ENCODE measurements at regions of chr6 and their contacts with region 1.

Region 1: GRCh38 chr6:141403795-141404194 is 728.9 kb upstream of the GJE1 start:
- DNase-seq: no peak
- ATAC-seq: peak; percentile 42

Region 2: GRCh38 chr6:140784573-140784972 is 619.2 kb before region 1 on chr6:
- intact Hi-C with region 1: loop called (anchors 5 kb)
- DNase-seq: no peak
- ATAC-seq: no peak

Region 3: DNA sequence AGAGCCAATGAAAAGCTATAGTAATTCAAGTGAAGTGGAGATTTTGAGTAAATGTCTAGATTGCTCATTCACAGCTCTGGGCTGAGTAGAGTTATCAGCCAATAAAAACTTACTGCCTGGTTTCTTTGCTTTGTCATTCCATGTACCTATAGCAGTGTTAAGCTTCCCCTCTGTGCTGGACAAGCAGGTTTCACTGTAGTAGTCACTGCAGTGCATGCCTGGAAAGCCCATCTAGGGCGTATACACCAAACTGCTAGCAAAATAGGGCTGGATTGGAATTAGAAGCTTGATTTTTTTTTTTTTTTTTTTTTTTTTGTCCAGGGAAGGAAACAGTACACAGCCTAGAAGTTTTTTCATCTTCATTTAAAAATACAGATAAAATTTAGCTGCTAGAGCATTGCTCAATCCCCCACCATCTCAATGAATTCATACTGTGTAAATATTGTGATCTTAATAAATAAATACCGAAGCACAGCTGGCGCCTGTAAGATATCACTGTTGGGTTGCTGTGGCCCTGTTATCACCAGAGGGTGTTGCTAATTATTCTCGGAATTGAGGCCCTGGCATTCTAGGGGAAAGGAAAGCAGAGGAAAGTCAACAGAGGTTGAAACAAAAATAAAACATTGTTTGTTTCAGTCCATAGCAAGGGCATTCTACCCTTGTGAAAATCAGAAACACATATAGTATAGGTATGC is 239.6 kb before region 1 on chr6:
- intact Hi-C with region 1: loop called (anchors 2 kb)
- DNase-seq: no peak
- ATAC-seq: peak; percentile 91

Region 4: GRCh38 chr6:141261016-141261671 is 142.7 kb before region 1 on chr6:
- intact Hi-C with region 1: loop called (anchors 5 kb)
- DNase-seq: peak; percentile 68
- ATAC-seq: peak; percentile 92

Region 5: DNA sequence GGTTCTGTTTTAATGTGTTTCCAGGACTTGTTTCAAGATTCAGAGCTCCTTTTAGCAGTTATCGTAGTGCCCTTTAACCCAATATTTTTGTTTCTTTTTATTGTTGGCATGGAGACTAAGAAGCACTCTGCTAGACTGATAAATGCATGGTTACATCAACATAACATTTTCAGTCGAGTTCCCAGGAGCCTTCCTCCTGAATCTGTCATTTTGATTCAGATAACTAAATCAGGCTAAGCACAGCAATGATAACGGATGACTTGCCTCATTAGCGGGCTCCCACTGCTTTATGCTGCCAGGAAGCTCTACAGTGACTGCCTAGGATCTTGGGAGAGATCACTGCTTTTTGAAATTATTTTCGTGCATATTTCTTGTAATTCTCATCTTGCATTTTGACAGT is 43.8 kb before region 1 on chr6:
- intact Hi-C with region 1: loop called (anchors 2 kb)
- DNase-seq: no peak
- ATAC-seq: peak; percentile 91

Region 6: GRCh38 chr6:141464490-141464889 is 60.7 kb after region 1 on chr6:
- intact Hi-C with region 1: loop called (anchors 5 kb)
- DNase-seq: no peak
- ATAC-seq: peak; percentile 85

Region 7: DNA sequence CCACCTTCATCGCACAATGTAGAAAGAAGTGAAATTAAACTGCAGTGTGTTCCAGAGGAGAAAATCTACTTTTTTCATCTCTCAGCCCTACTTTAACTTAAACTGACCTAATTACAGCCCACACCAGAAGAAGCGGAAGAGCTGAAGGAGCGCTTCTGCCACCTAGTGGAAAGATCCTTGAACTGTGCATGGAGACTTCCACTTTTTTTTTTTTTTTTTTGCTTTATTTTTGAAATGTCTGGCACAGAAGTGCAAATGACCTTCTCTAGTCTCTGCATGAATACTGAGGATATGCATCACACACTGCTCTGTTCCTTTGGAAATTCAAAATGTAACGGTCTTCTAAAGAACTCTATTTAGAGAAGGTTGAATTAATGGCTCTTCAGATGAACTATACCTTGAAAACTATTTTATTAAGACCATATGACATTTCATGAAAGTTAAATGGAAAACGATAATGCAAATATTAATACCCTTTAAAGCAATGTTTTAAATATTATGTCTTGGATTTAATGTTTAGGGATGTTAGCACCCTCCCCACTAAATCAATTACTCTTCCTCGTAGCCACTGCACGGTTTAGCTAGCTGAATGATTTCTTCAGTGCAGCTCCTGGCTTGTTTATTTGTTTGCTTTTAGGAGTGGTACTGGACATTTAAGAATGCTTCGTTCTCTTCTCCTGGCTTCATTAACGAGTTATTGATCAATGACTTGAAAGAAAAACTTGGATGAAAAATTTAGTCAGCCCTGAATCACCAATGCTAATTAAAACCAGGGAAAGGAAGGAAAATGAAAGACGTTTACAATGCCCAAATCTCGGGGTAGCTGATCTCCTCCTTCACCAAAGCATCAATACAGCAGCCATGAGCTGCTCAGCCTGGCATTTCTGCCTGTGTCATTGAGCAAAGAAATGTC is 159.3 kb after region 1 on chr6:
- intact Hi-C with region 1: loop called (anchors 5 kb)
- DNase-seq: peak; percentile 69
- ATAC-seq: peak; percentile 93

Measured in Right ventricle myocardium inferior (tissue), 1 donor.